SK-N-SH (cell line): ENCODE measurements at regions of chr2 and their contacts with region 1.

Region 1: GRCh38 chr2:45839508-45840251 is 188.2 kb downstream of the PRKCE start:
- DNase-seq: peak; percentile 63
- H3K4me3 ChIP-seq: no peak overlapping the region; a peak in 1 of 4 replicates
- H3K27ac ChIP-seq: peak overlapping the region; percentile 33 to 70; a peak in 3 of 4 replicates
- H3K4me1 ChIP-seq: peaks cover 18 to 42% of the 10 kb centered on the region in 2 experiments
- H3K27me3 ChIP-seq: no peaks in the 10 kb centered on the region
- CTCF ChIP-seq: no peak
- EP300 ChIP-seq: peak in 1 of 2 experiments; percentile 57; a peak in 2 of 4 replicates
- RAD21 ChIP-seq: peak; percentile 23; the same call in 1 of the 2 replicates

Region 2: GRCh38 chr2:45813003-45813941 is 26.4 kb before region 1 on chr2:
- CTCF ChIA-PET with region 1: no interaction called
- POLR2A ChIA-PET with region 1: no interaction called
- DNase-seq: peak; percentile 56
- H3K4me3 ChIP-seq: no peak overlapping the region
- H3K27ac ChIP-seq: peak overlapping the region; percentile 57 to 93
- H3K4me1 ChIP-seq: peaks cover 17 to 49% of the 10 kb centered on the region in 2 experiments
- H3K27me3 ChIP-seq: no peaks in the 10 kb centered on the region
- CTCF ChIP-seq: no peak
- EP300 ChIP-seq: peak in 1 of 2 experiments; percentile 53; a peak in 2 of 4 replicates
- RAD21 ChIP-seq: 0 out of 2 replicates have a peak, but pooled peaks have one; percentile 13

Region 3: DNA sequence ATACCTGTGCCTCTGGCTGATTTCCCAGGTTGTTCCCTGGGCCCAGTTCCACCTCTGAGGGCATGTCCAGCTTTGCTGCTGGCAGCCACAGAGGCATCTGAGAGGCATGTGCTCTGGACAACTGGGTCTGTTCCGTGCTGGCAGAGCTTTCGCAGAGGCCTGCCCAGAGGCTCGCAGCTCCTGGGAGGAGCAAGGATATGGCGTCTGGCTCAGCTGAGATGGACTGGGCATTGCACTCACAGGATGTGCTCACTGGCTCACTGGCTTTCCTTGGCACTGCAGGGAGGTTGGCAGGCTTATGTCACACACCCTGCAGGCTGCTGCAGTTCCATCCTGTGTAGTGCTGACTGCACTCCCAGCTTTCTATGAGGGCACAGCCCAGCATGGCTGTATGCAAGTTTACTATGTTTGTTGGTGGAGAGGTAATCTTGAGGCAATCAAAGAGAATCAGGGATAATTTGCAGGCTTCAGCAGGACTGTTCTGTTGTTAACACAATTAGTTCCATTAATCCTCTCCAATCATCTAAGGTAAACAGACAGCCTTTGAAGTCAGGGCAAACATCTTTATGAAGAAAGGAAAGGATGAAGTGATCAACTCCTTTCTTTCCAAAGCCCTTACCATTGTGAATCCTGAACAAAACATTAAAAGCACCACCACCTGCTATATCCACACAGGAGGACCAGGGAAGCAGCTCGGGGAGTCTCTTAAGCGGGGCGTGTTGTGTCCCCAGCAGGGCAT is 15.8 kb before region 1 on chr2:
- CTCF ChIA-PET with region 1: interaction called, 15 read pairs
- POLR2A ChIA-PET with region 1: interaction called, 4 read pairs
- DNase-seq: peak; percentile 89
- H3K4me3 ChIP-seq: no peak overlapping the region
- H3K27ac ChIP-seq: peak overlapping the region in 1 of 2 experiments; percentile 96; a peak in 2 of 4 replicates
- H3K4me1 ChIP-seq: peaks cover 12 to 43% of the 10 kb centered on the region in 2 experiments; a peak in 2 of 4 replicates
- H3K27me3 ChIP-seq: no peaks in the 10 kb centered on the region
- CTCF ChIP-seq: no peak
- EP300 ChIP-seq: peak in 1 of 2 experiments; percentile 63; a peak in 2 of 4 replicates
- RAD21 ChIP-seq: peak; percentile 48